ENCODE measurements at regions of chr2 and their contacts with region 1.

Region 1: GRCh38 chr2:235898766-235899165 is 269.4 kb downstream of the GBX2 start:
- DNase-seq: no peak
- ATAC-seq: no peak
- H3K4me3 ChIP-seq: no peak overlapping the region
- H3K27ac ChIP-seq: no peak overlapping the region
- H3K4me1 ChIP-seq: no peaks in the 10 kb centered on the region
- H3K27me3 ChIP-seq: no peaks in the 10 kb centered on the region
- CTCF ChIP-seq: no peak
- POLR2A ChIP-seq: no peak

Region 2: GRCh38 chr2:234840336-234840735 is 1058.4 kb before region 1 on chr2:
- in situ Hi-C with region 1: no loop called
- intact Hi-C with region 1: loop called (anchors 5 kb)
- DNase-seq: no peak
- ATAC-seq: peak; percentile 62 to 66
- H3K4me3 ChIP-seq: no peak overlapping the region
- H3K27ac ChIP-seq: no peak overlapping the region
- H3K4me1 ChIP-seq: peaks cover 5 to 7% of the 10 kb centered on the region in 2 donors
- H3K27me3 ChIP-seq: no peaks in the 10 kb centered on the region
- CTCF ChIP-seq: no peak
- POLR2A ChIP-seq: no peak

Region 3: DNA sequence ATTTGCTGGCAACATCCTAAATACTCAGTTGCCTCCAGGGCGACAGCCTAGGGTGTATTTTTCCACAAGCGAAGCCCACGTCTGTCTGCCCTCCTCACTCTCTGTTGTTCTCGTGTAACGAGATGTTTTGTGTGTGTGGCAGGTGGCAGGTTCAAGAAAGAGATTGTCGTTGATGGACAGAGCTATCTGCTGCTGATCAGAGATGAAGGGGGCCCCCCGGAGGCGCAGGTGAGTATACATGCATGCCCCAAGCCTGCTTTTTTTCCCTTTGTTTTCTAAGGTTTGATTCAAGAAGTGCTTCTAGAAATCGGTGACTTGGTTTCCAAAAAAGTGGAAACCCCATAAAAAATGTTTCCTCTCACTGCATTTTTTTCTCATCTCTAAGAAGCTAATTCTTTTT is 157.9 kb before region 1 on chr2:
- in situ Hi-C with region 1: no loop called
- intact Hi-C with region 1: no loop called
- DNase-seq: no peak
- ATAC-seq: no peak
- H3K4me3 ChIP-seq: no peak overlapping the region
- H3K27ac ChIP-seq: no peak overlapping the region
- H3K4me1 ChIP-seq: no peaks in the 10 kb centered on the region
- H3K27me3 ChIP-seq: no peaks in the 10 kb centered on the region
- CTCF ChIP-seq: peak in 2 of 5 experiments; percentile 15 to 22
- POLR2A ChIP-seq: no peak

Region 4: DNA sequence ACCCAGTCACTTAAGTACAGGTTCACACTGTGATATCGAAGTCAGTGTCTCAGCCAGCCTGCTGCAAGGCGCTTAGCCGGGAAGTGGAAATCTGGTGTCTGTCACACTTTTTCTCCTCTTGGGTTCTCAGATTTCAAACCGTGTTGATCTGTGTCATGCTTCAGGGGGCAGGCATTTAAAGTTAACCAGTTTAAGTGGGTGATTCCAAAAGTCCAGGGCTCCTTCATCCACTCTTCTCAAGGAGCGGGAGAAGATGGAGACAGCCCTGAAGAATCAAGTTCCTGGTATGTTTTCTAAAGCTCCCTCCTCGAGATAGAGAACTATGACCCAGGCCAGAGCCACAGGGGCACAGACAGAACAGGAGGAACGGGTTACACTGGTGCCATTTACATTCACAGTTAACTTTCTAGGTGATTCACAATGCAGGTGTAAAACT is 62.3 kb before region 1 on chr2:
- in situ Hi-C with region 1: no loop called
- intact Hi-C with region 1: no loop called
- DNase-seq: no peak
- ATAC-seq: no peak
- H3K4me3 ChIP-seq: no peak overlapping the region
- H3K27ac ChIP-seq: no peak overlapping the region
- H3K4me1 ChIP-seq: no peaks in the 10 kb centered on the region
- H3K27me3 ChIP-seq: no peaks in the 10 kb centered on the region
- CTCF ChIP-seq: no peak
- POLR2A ChIP-seq: no peak

Measured in gastrocnemius medialis (tissue), 4 donors.